ENCODE measurements at regions of chrX and their contacts with region 1.

Region 1: DNA sequence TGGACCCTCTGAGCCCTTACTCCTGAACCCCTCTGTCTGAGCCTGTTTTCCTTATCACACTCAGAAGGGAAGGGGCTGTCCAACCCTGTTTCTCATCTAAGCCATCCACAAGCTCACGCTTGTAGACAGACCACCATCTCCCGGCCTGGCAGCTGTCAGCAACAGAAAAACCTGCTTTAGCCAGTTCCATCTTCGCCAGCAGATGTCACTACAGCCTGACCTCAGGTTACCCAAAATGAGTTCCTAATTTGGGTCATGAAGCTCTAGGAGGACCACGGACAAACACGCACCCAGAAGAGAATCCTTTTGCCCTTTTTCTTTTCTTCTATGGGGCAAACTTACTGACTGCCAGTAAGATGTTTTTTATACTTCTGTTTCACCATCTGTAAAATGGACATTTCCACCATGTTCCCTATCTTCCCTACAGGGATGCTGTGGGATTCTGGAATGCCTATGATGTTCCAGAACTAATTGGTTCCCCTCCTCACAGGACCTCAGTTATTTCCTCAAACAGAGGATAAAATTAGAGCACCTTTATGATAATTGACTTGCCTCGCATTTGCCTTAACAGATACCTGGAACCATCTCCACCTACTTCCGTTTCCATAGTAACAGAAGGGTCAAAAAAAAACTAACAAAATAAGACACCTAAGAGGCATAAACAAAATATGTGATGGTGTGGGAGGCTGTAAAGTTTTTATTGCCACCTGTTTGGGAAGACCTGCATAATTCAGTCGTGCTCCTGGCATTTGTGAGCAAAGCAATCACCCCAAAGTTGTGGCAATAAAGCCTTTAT is 445.2 kb downstream of the BCOR start:
- DNase-seq: no peak

Region 2: GRCh38 chrX:39688576-39689375 is 36.2 kb after region 1 on chrX:
- intact Hi-C with region 1: loop called in 1 of 2 experiments (anchors 5 kb)
- DNase-seq: peak; percentile 86

Measured in posterior vena cava (tissue), 2 donors.